ENCODE measurements at regions of chr6 and their contacts with region 1.

Region 1: GRCh38 chr6:32432050-32432450 is 7.6 kb upstream of the HLA-DRA start:
- DNase-seq: peak in 5 of 9 donors; percentile 16 to 47 (median 33)
- ATAC-seq: peak; percentile 52
- H3K4me3 ChIP-seq: no peak overlapping the region
- H3K4me3 Mint-ChIP-seq: no peak overlapping the region
- H3K27ac ChIP-seq: no peak overlapping the region
- H3K27ac Mint-ChIP-seq: no peak overlapping the region
- H3K4me1 ChIP-seq: no peaks in the 10 kb centered on the region
- H3K4me1 Mint-ChIP-seq: peaks cover 0 to 2% (median 0%) of the 10 kb centered on the region in 7 donors
- H3K27me3 ChIP-seq: peaks cover 0 to 4% of the 10 kb centered on the region in 2 donors
- H3K27me3 Mint-ChIP-seq: peaks cover 0 to 47% (median 3%) of the 10 kb centered on the region in 5 donors

Region 2: DNA sequence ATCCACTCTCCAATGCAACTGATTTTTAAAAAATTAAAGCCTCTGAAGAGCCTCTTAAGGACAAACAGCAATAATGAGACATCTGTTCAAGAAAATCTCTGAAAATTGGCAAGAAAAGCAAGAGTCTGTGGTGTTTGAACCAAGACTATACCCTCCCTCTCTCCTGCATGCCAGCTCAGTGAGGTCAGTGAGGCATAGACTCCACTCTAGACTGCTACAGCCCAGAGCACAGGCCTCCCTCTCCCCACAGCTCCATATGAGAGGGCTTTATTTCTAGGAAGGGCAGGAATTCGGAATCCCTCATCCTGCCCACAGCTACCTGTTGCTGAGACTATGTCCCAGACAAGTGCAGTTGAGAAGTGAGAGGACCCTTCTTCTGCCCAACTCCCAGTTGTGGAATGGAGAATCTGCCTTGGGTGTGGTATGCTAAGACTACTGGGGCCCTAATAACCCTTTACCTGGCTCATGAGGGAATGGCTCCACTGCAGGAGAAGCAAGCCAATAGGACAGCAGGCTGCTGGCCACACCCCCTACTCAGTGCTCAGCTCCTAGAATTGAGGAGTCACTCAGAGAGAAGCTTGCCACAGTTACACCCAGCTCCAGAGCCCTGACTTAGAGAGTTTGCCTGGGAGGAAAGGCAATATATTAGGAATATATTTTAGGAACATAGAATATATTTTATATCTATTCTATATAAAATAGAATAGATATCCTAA is 182.5 kb after region 1 on chr6:
- CTCF ChIA-PET with region 1: no interaction called
- POLR2A ChIA-PET with region 1: no interaction called
- intact Hi-C with region 1: no loop called
- DNase-seq: no peak
- ATAC-seq: no peak
- H3K4me3 ChIP-seq: no peak overlapping the region
- H3K4me3 Mint-ChIP-seq: no peak overlapping the region
- H3K27ac ChIP-seq: no peak overlapping the region
- H3K27ac Mint-ChIP-seq: no peak overlapping the region
- H3K4me1 ChIP-seq: peaks cover 0 to 3% of the 10 kb centered on the region in 2 donors
- H3K4me1 Mint-ChIP-seq: peaks cover 0 to 15% (median 0%) of the 10 kb centered on the region in 7 donors
- H3K27me3 ChIP-seq: no peaks in the 10 kb centered on the region
- H3K27me3 Mint-ChIP-seq: peaks cover 0 to 6% (median 0%) of the 10 kb centered on the region in 5 donors

Region 3: DNA sequence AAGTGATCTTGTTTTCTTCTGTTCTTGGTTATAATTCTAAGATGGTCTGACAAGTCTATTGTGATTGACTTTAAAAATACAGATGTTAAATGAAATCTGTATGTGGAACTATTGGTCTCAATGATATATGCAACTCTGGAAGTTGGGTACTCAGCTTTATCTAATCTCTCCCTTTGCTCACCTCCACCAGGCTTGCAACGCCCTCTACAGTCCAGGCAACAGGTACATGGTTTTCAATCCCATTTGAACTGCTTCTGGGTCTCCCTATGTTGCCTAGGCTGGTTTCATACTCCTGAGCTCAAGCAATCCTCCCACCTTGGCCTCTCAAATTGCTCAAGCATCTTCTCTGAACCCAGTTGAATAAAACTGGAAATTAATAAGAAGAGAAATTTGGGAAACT is 260.0 kb after region 1 on chr6:
- CTCF ChIA-PET with region 1: no interaction called
- POLR2A ChIA-PET with region 1: no interaction called
- intact Hi-C with region 1: loop called (anchors 2 kb)
- DNase-seq: peak in 8 of 9 donors; percentile 13 to 62 (median 46)
- ATAC-seq: peak; percentile 76
- H3K4me3 ChIP-seq: no peak overlapping the region
- H3K4me3 Mint-ChIP-seq: no peak overlapping the region
- H3K27ac ChIP-seq: no peak overlapping the region
- H3K27ac Mint-ChIP-seq: no peak overlapping the region
- H3K4me1 ChIP-seq: peaks cover 0 to 1% of the 10 kb centered on the region in 2 donors
- H3K4me1 Mint-ChIP-seq: peaks cover 4 to 16% (median 7%) of the 10 kb centered on the region in 7 donors
- H3K27me3 ChIP-seq: no peaks in the 10 kb centered on the region
- H3K27me3 Mint-ChIP-seq: peaks cover 3 to 58% (median 23%) of the 10 kb centered on the region in 5 donors

Region 4: GRCh38 chr6:32700391-32701040 is 268.5 kb after region 1 on chr6:
- CTCF ChIA-PET with region 1: interaction called, 12 read pairs
- POLR2A ChIA-PET with region 1: no interaction called
- intact Hi-C with region 1: loop called (anchors 1 kb)
- DNase-seq: peak in 6 of 9 donors; percentile 15 to 54 (median 38)
- ATAC-seq: peak; percentile 68
- H3K4me3 ChIP-seq: no peak overlapping the region
- H3K4me3 Mint-ChIP-seq: peak overlapping the region in 7 of 10 donors; percentile 25 to 61 (median 46)
- H3K27ac ChIP-seq: no peak overlapping the region
- H3K27ac Mint-ChIP-seq: no peak overlapping the region
- H3K4me1 ChIP-seq: no peaks in the 10 kb centered on the region
- H3K4me1 Mint-ChIP-seq: peaks cover 0 to 9% (median 5%) of the 10 kb centered on the region in 7 donors
- H3K27me3 ChIP-seq: no peaks in the 10 kb centered on the region
- H3K27me3 Mint-ChIP-seq: peaks cover 26 to 69% (median 43%) of the 10 kb centered on the region in 5 donors

Region 5: GRCh38 chr6:32785781-32786533 is 353.9 kb after region 1 on chr6:
- CTCF ChIA-PET with region 1: interaction called, 3 read pairs
- POLR2A ChIA-PET with region 1: no interaction called
- intact Hi-C with region 1: loop called (anchors 1 to 5 kb)
- DNase-seq: peak in 6 of 9 donors; percentile 28 to 54 (median 36)
- ATAC-seq: peak; percentile 76
- H3K4me3 ChIP-seq: no peak overlapping the region
- H3K4me3 Mint-ChIP-seq: no peak overlapping the region
- H3K27ac ChIP-seq: no peak overlapping the region
- H3K27ac Mint-ChIP-seq: no peak overlapping the region
- H3K4me1 ChIP-seq: no peaks in the 10 kb centered on the region
- H3K4me1 Mint-ChIP-seq: peaks cover 0 to 2% (median 0%) of the 10 kb centered on the region in 7 donors
- H3K27me3 ChIP-seq: no peaks in the 10 kb centered on the region
- H3K27me3 Mint-ChIP-seq: peaks cover 13 to 68% (median 21%) of the 10 kb centered on the region in 5 donors

Measured in naive thymus-derived CD4-positive, alpha-beta T cell (primary cell).